Activated B cell treated with CpG ODN at 0.5 μM for 24 hours (primary cell): ENCODE measurements at regions of chr3 and their contacts with region 1.

Region 1: GRCh38 chr3:193509103-193509965 is 45.4 kb downstream of the ATP13A4 start:
- DNase-seq: no peak
- ATAC-seq: no peak
- H3K4me3 Mint-ChIP-seq: no peak overlapping the region
- H3K27ac Mint-ChIP-seq: no peak overlapping the region
- H3K4me1 Mint-ChIP-seq: no peaks in the 10 kb centered on the region
- H3K27me3 Mint-ChIP-seq: no peaks in the 10 kb centered on the region
- CTCF ChIP-seq: no peak

Region 2: DNA sequence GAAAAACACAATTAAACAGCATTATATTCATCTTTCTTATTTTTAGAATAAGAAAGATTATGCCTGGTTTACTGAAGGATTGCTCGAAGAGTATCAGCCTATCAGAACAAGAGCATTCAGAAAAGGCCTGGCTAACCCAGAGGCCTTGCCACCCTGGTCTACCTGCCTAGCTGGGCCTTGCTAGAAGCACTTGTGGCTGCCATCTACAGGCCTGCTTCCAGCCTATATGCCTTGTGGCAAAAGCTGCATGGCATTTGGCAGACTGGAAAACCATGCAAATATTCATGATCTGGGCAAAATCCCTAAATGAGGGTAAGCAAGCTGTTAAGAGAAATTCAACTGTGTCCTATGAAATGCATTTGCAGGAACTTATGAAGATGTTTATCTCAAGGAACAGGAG is 54.7 kb after region 1 on chr3:
- CTCF ChIA-PET with region 1: no interaction called
- POLR2A ChIA-PET with region 1: no interaction called
- intact Hi-C with region 1: loop called (anchors 10 kb)
- DNase-seq: no peak
- ATAC-seq: no peak
- H3K4me3 Mint-ChIP-seq: no peak overlapping the region
- H3K27ac Mint-ChIP-seq: no peak overlapping the region
- H3K4me1 Mint-ChIP-seq: no peaks in the 10 kb centered on the region
- H3K27me3 Mint-ChIP-seq: no peaks in the 10 kb centered on the region
- CTCF ChIP-seq: no peak